ENCODE measurements at regions of chr11 and their contacts with region 1.

Region 1: DNA sequence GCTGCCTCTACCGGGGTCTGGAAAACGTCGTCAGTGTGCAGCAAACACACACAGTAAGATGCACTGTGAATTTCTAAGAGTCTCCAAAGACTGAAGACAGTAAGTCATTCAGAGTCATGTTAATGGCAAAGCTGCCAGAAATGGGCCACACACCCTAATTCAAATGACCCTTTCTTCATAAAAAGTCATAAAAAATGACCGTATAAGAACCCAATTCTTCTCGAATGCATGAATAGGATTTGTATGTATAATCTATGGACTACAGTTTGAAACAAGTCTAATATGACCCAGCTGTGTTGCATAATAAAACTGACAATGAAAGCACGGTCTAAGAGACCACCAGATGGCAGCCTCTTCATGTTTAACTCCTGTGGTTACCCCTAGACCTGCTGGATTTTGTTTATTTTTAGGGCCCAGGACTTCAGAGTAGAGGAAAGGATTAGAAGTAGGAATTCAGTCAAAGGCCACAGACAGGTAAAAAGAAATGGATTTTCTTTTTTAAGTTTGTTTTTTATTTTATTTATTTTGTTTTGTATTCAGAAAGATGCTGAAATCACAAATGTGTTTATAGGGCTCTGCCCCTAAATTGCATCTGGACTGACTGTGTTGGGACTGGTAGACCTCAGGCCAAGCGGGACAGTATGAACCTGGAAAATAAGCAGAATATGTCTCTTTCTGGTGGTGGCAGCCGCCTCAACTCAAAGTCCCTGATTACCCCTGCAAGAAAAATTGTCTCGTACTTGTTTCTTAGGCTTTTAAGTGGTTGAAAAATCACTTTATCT is 32.1 kb upstream of the SLC5A12 start:
- DNase-seq: peak in 3 of 5 donors; percentile 10 to 45 (median 21)
- ATAC-seq: peak in 3 of 4 donors; percentile 66 to 84 (median 75)
- H3K4me3 ChIP-seq: no peak overlapping the region
- H3K27ac ChIP-seq: no peak overlapping the region
- H3K4me1 ChIP-seq: peaks cover 0 to 8% (median 0%) of the 10 kb centered on the region in 12 donors
- H3K27me3 ChIP-seq: no peaks in the 10 kb centered on the region
- CTCF ChIP-seq: peak; percentile 26 to 74 (median 60)
- POLR2A ChIP-seq: no peak

Region 2: DNA sequence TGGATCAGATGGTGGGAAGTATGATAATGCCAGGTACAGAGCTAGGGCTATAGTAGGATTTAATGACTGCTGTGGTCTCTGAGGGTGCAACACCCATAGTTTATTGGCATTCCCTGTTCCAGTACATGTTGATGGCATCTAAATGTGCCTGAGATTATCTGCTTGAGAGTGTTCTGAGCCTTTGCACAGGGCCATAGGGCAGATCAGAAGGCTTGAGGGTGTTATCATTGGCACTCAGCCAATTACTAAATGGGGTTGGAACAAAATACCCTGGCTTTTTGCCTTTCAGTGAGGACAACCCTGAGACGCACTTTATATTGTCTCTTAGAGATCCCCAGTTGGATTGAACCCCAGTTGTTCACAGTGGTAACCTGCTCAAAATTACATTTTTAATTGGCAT is 38.8 kb before region 1 on chr11:
- intact Hi-C with region 1: no loop called
- DNase-seq: no peak
- ATAC-seq: peak; percentile 26 to 49 (median 42)
- H3K4me3 ChIP-seq: no peak overlapping the region
- H3K27ac ChIP-seq: no peak overlapping the region
- H3K4me1 ChIP-seq: peaks cover 0 to 6% (median 0%) of the 10 kb centered on the region in 12 donors
- H3K27me3 ChIP-seq: no peaks in the 10 kb centered on the region
- CTCF ChIP-seq: no peak
- POLR2A ChIP-seq: no peak

Region 3: GRCh38 chr11:26834601-26835000 is 80.7 kb after region 1 on chr11:
- intact Hi-C with region 1: no loop called
- DNase-seq: no peak
- ATAC-seq: no peak
- H3K4me3 ChIP-seq: no peak overlapping the region
- H3K27ac ChIP-seq: no peak overlapping the region
- H3K4me1 ChIP-seq: no peaks in the 10 kb centered on the region
- H3K27me3 ChIP-seq: no peaks in the 10 kb centered on the region
- CTCF ChIP-seq: no peak
- POLR2A ChIP-seq: no peak

Region 4: DNA sequence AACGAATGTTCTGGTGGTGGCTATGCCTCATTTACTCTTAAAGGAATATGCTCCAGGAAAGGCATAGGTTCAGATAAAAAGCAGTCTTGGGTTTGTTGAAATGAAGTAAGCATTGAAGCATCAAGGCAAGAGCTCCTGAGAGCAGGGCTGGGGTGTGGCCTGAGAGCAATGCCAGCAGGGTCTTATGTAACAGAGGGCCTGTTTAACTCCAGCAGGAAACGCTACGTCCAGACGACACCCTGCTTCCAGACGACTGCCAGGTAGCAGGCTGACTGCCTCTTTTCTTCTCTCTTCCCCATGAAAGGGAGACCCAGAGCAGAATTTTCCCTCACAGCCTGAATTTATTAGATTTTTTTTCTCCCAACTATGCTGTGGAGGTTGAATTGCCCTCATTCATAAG is 95.1 kb after region 1 on chr11:
- intact Hi-C with region 1: loop called in 1 of 10 experiments (anchors 10 kb)
- DNase-seq: peak in 4 of 5 donors; percentile 15 to 58 (median 38)
- ATAC-seq: peak; percentile 56 to 76 (median 64)
- H3K4me3 ChIP-seq: no peak overlapping the region
- H3K27ac ChIP-seq: peak overlapping the region in 8 of 12 donors; percentile 11 to 71 (median 58)
- H3K4me1 ChIP-seq: peaks cover 0 to 15% (median 0%) of the 10 kb centered on the region in 12 donors
- H3K27me3 ChIP-seq: no peaks in the 10 kb centered on the region
- CTCF ChIP-seq: no peak
- POLR2A ChIP-seq: no peak

Region 5: GRCh38 chr11:27124514-27125264 is 370.8 kb after region 1 on chr11:
- intact Hi-C with region 1: loop called in 1 of 10 experiments (anchors 10 kb)
- DNase-seq: no peak
- ATAC-seq: no peak
- H3K4me3 ChIP-seq: no peak overlapping the region
- H3K27ac ChIP-seq: no peak overlapping the region
- H3K4me1 ChIP-seq: no peaks in the 10 kb centered on the region
- H3K27me3 ChIP-seq: no peaks in the 10 kb centered on the region
- CTCF ChIP-seq: peak in 2 of 12 donors; percentile 13 to 22
- POLR2A ChIP-seq: no peak

Region 6: GRCh38 chr11:27153136-27153535 is 399.2 kb after region 1 on chr11:
- intact Hi-C with region 1: loop called in 8 of 10 experiments (anchors 1 to 5 kb)
- DNase-seq: no peak
- ATAC-seq: no peak
- H3K4me3 ChIP-seq: no peak overlapping the region
- H3K27ac ChIP-seq: no peak overlapping the region
- H3K4me1 ChIP-seq: peaks cover 0 to 3% (median 0%) of the 10 kb centered on the region in 12 donors
- H3K27me3 ChIP-seq: no peaks in the 10 kb centered on the region
- CTCF ChIP-seq: no peak
- POLR2A ChIP-seq: no peak

Region 7: GRCh38 chr11:27158722-27159679 is 405.1 kb after region 1 on chr11:
- intact Hi-C with region 1: loop called in 9 of 10 experiments (anchors 1 to 5 kb)
- DNase-seq: peak in 3 of 5 donors; percentile 33 to 36 (median 34)
- ATAC-seq: peak; percentile 58 to 96 (median 82)
- H3K4me3 ChIP-seq: no peak overlapping the region
- H3K27ac ChIP-seq: no peak overlapping the region
- H3K4me1 ChIP-seq: no peaks in the 10 kb centered on the region
- H3K27me3 ChIP-seq: no peaks in the 10 kb centered on the region
- CTCF ChIP-seq: peak; percentile 34 to 79 (median 68)
- POLR2A ChIP-seq: no peak